PC-9 (cell line): ENCODE measurements at regions of chr2 and their contacts with region 1.

Region 1: GRCh38 chr2:237714690-237715458 is 83.7 kb upstream of the RBM44 start:
- DNase-seq: peak in 1 of 2 experiments; percentile 70
- H3K4me3 ChIP-seq: no peak overlapping the region
- H3K27ac ChIP-seq: 0 out of 2 replicates have a peak overlapping the region, but pooled peaks have one; percentile 1
- H3K4me1 ChIP-seq: no peaks in the 10 kb centered on the region
- H3K27me3 ChIP-seq: no peaks in the 10 kb centered on the region
- CTCF ChIP-seq: no peak

Region 2: GRCh38 chr2:237413777-237414661 is 300.9 kb before region 1 on chr2 and contains the start of gene COL6A3:
- CTCF ChIA-PET with region 1: no interaction called
- POLR2A ChIA-PET with region 1: no interaction called
- intact Hi-C with region 1: no loop called
- DNase-seq: no peak
- H3K4me3 ChIP-seq: no peak within 1 kb of the TSS
- H3K27ac ChIP-seq: no peak within 1 kb of the TSS
- H3K4me1 ChIP-seq: no peaks in the 10 kb centered on the region
- H3K27me3 ChIP-seq: no peaks in the 10 kb centered on the region
- CTCF ChIP-seq: no peak
- total RNA-seq, gene COL6A3: 0.57 and 0.75 TPM in 2 replicates

Region 3: GRCh38 chr2:237581751-237582746 is 132.8 kb before region 1 on chr2:
- CTCF ChIA-PET with region 1: interaction called, 16 read pairs
- POLR2A ChIA-PET with region 1: no interaction called
- intact Hi-C with region 1: no loop called
- DNase-seq: no peak
- H3K4me3 ChIP-seq: no peak overlapping the region
- H3K27ac ChIP-seq: no peak overlapping the region
- H3K4me1 ChIP-seq: no peaks in the 10 kb centered on the region
- H3K27me3 ChIP-seq: no peaks in the 10 kb centered on the region
- CTCF ChIP-seq: no peak

Region 4: GRCh38 chr2:237590272-237591140 is 124.4 kb before region 1 on chr2 and contains the start of gene RAB17:
- CTCF ChIA-PET with region 1: no interaction called
- POLR2A ChIA-PET with region 1: interaction called, 6 read pairs
- intact Hi-C with region 1: loop called (anchors 1 kb)
- DNase-seq: peak; percentile 91 to 94
- H3K4me3 ChIP-seq: peak within 1 kb of the TSS; percentile 64
- H3K27ac ChIP-seq: peak within 1 kb of the TSS; percentile 85
- H3K4me1 ChIP-seq: peaks cover 28% of the 10 kb centered on the region
- H3K27me3 ChIP-seq: no peaks in the 10 kb centered on the region
- CTCF ChIP-seq: no peak
- total RNA-seq, gene RAB17: 86.3 and 88.1 TPM in 2 replicates

Region 5: DNA sequence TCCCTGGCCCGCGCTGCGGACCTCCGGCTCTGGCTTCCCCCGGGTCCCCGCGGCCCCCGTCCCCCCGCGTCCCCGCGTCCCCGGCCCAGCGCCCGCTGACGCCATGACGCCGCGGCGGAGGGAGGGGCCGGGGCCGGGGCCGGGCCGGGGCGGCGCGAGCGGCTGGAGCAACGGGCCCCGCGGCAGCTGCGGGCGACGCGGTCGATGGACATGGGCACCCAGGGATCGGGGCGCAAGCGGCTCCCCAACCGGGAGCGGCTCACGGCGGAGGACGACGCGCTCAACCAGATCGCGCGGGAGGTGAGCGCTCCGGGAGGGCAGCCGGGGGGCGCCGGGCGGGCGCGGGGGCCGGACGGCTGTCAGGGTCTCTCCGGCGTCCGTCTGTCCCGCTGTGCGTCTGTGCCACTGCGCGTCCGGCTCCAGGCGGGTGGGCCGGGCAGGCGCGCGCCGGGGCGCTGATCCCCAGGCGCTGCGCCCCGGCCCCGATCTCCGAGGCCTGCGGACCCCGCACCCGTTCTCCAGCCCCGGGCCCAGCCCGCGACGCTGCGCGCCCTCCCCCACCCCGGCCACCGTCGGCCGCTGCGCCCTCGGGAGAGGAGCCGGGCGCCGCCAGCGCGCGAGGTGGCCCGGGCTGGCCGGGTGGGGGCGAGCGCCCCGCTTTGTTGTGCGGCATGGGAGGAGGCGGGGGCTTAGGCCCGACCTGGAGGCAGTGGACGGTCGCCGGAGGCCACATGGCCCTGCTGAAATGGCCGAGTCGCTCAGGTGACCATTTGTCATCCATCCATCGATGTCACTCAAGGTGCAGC is 87.2 kb before region 1 on chr2 and contains the start of gene LRRFIP1:
- CTCF ChIA-PET with region 1: no interaction called
- POLR2A ChIA-PET with region 1: no interaction called
- intact Hi-C with region 1: no loop called
- DNase-seq: peak in 1 of 2 experiments; percentile 63
- H3K4me3 ChIP-seq: peak within 1 kb of the TSS; percentile 47; the same call in 1 of the 2 replicates
- H3K27ac ChIP-seq: no peak within 1 kb of the TSS
- H3K4me1 ChIP-seq: no peaks in the 10 kb centered on the region
- H3K27me3 ChIP-seq: peaks cover 36% of the 10 kb centered on the region
- CTCF ChIP-seq: no peak
- total RNA-seq, gene LRRFIP1: 221 and 238 TPM in 2 replicates

Region 6: DNA sequence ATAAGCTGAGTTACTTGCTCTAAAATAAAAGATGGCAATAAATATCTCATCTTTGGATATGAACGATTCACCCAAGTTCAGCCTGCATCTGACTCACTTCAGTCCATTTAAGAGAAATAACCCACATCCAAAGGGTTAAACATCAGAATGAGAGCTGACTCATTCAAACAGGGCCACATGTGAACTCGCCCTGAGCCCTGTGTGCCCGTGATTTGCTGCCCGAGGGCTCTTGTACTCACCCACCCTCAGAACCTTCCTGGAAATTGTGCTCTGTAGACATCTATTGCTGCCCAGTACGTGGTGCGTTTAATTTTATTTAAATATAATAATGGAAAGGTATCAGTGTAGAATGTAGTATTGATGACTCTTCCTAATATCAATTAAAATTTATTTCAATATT is 16.8 kb after region 1 on chr2:
- CTCF ChIA-PET with region 1: no interaction called
- POLR2A ChIA-PET with region 1: interaction called, 3 read pairs
- intact Hi-C with region 1: loop called (anchors 2 kb)
- DNase-seq: peak; percentile 69 to 77
- H3K4me3 ChIP-seq: no peak overlapping the region
- H3K27ac ChIP-seq: peak overlapping the region; percentile 6; the same call in 1 of the 2 replicates
- H3K4me1 ChIP-seq: peaks cover 31% of the 10 kb centered on the region
- H3K27me3 ChIP-seq: no peaks in the 10 kb centered on the region
- CTCF ChIP-seq: no peak

Region 7: GRCh38 chr2:237752761-237753165 is 37.9 kb after region 1 on chr2:
- CTCF ChIA-PET with region 1: no interaction called
- POLR2A ChIA-PET with region 1: no interaction called
- intact Hi-C with region 1: no loop called
- DNase-seq: no peak
- H3K4me3 ChIP-seq: no peak overlapping the region
- H3K27ac ChIP-seq: no peak overlapping the region
- H3K4me1 ChIP-seq: no peaks in the 10 kb centered on the region
- H3K27me3 ChIP-seq: no peaks in the 10 kb centered on the region
- CTCF ChIP-seq: no peak

Region 8: DNA sequence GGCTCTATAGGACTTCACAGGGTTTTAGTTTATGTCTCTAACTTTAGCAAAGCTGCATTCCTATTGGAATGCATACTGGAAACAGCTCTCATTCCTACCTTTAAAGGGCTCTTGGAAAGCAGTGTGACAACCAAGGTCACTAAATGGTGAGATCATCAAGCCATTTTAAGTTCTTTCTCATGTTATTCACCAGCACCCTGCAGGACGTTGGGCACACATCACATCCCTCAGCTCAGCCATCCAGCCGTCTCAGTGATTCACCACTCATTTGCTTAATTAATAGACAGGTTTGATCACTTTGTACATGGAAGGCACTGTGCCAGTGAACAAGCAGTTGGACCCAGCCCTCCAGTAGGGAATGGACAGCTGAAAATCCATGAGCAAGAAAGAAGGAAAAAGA is 51.5 kb after region 1 on chr2:
- CTCF ChIA-PET with region 1: interaction called, 10 read pairs
- POLR2A ChIA-PET with region 1: no interaction called
- intact Hi-C with region 1: no loop called
- DNase-seq: no peak
- H3K4me3 ChIP-seq: no peak overlapping the region
- H3K27ac ChIP-seq: no peak overlapping the region
- H3K4me1 ChIP-seq: no peaks in the 10 kb centered on the region; the same call in 1 of the 2 replicates
- H3K27me3 ChIP-seq: no peaks in the 10 kb centered on the region
- CTCF ChIP-seq: no peak

Region 9: DNA sequence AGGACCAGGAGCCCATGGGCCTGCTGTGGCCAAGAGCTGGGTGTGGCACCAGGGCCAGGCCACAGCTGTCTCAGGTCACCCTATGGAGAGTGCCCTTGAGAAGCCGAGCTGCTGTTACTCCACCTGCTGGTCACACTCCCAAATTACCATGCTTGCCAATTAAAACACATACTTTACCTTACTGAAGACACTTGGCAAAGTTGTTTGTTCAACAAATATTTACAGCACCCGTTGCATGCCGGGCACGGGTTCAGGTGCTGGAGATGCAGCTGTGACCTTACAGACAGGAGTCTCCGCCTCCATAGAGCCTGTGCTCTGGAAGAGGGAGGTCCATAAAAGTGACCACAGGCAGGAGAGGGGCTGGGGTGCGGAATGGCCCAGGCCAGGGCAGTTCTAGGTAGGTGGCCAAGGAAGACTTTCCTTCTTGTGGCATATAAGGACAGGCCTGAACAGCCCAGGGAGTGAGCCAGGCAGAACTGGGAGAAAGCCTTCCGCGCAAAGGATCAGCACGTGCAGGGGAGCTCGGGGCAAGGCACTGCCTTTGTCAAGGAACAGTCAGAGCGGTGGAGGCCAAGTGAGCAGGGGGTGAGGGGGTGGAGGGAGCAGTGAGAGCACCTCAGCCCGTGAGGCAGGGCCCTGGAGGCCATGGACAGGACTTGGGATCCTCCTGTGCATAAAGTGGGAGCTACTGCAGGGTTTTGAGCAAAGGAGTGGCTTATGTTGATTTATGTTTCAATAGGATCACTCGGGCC is 60.1 kb after region 1 on chr2:
- CTCF ChIA-PET with region 1: interaction called, 11 read pairs
- POLR2A ChIA-PET with region 1: no interaction called
- intact Hi-C with region 1: no loop called
- DNase-seq: peak; percentile 59 to 63
- H3K4me3 ChIP-seq: no peak overlapping the region
- H3K27ac ChIP-seq: no peak overlapping the region
- H3K4me1 ChIP-seq: no peaks in the 10 kb centered on the region
- H3K27me3 ChIP-seq: no peaks in the 10 kb centered on the region
- CTCF ChIP-seq: peak; percentile 89

Region 10: DNA sequence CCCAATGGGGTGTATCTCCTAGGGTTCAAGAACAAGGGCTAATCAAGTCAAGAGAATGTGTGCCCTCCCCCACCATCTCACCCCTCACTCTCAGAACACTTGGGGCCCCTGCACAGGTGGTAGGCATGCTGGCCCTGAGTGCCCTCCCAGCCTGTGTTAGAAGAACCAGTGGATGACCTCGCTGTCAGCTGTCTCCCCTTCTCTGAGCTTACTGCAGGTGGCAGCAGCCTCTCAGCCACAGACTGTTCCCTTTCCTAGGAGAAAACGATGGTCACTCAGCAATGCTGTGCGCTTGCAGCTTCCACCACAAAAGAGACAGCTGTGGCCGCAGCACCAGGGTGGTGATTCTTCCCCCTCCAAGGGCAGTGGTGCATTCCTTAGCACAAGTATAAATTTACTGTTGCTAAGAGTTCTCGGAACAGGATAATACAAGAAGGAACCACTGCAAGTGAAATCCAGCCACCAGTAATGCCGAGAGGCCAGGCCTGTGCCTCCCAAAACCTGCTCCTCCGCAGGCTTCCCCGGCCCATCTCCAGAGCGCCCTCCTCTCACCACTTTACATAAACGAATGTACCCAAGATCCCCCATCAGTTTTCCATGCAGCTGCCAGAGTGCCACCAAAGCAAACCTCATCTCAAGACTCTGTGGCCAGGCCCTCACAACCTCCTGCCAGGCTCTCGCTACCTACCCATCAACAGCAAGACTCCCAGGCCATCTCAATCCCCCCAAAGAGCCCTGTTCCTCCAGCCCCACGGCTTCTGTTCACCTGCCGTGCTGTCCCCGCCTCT is 143.6 kb after region 1 on chr2:
- CTCF ChIA-PET with region 1: no interaction called
- POLR2A ChIA-PET with region 1: no interaction called
- intact Hi-C with region 1: no loop called
- DNase-seq: peak; percentile 78 to 88
- H3K4me3 ChIP-seq: peak overlapping the region; percentile 64
- H3K27ac ChIP-seq: no peak overlapping the region
- H3K4me1 ChIP-seq: peaks cover 42% of the 10 kb centered on the region
- H3K27me3 ChIP-seq: no peaks in the 10 kb centered on the region
- CTCF ChIP-seq: peak; percentile 93